ENCODE measurements at regions of chr19 and their contacts with region 1.

Region 1: GRCh38 chr19:58475714-58476497 is at the start of gene ZNF446:
- DNase-seq: peak; percentile 93 to 99
- ATAC-seq: peak; percentile 84 to 93 (median 88)
- H3K4me3 ChIP-seq: peak within 1 kb of the TSS; percentile 59
- H3K4me3 Mint-ChIP-seq: peak within 1 kb of the TSS; percentile 93
- H3K27ac ChIP-seq: peak within 1 kb of the TSS; percentile 90
- H3K27ac Mint-ChIP-seq: peak within 1 kb of the TSS; percentile 94 to 99
- H3K4me1 ChIP-seq: peaks cover 21% of the 10 kb centered on the region
- H3K4me1 Mint-ChIP-seq: peaks cover 8 to 18% of the 10 kb centered on the region in 2 donors
- H3K27me3 ChIP-seq: no peaks in the 10 kb centered on the region
- H3K27me3 Mint-ChIP-seq: no peaks in the 10 kb centered on the region
- CTCF ChIP-seq: no peak
- total RNA-seq, gene ZNF446: 11.9 to 14.5 (median 13.5) TPM

Region 2: GRCh38 chr19:58519355-58520256 is 43.7 kb after region 1 on chr19 and contains the start of gene ZBTB45:
- intact Hi-C with region 1: loop called (anchors 1 kb)
- DNase-seq: peak; percentile 91 to 95
- ATAC-seq: peak; percentile 80 to 93 (median 83)
- H3K4me3 ChIP-seq: peak within 1 kb of the TSS; percentile 81
- H3K4me3 Mint-ChIP-seq: peak within 1 kb of the TSS; percentile 97
- H3K27ac ChIP-seq: peak within 1 kb of the TSS; percentile 98
- H3K27ac Mint-ChIP-seq: peak within 1 kb of the TSS; percentile 97 to 100
- H3K4me1 ChIP-seq: peaks cover 38% of the 10 kb centered on the region
- H3K4me1 Mint-ChIP-seq: peaks cover 25 to 46% of the 10 kb centered on the region in 2 donors
- H3K27me3 ChIP-seq: no peaks in the 10 kb centered on the region
- H3K27me3 Mint-ChIP-seq: no peaks in the 10 kb centered on the region
- CTCF ChIP-seq: peak; percentile 71
- total RNA-seq, gene ZBTB45: 9.6 to 12.6 (median 9.8) TPM